ENCODE measurements at regions of chr21 and their contacts with region 1.

Region 1: GRCh38 chr21:43805275-43805800 is 16.0 kb downstream of the RRP1 start:
- DNase-seq: peak; percentile 69
- ATAC-seq: peak; percentile 97
- H3K4me3 Mint-ChIP-seq: peak overlapping the region; percentile 78
- H3K27ac Mint-ChIP-seq: peak overlapping the region; percentile 95
- H3K4me1 Mint-ChIP-seq: peaks cover 37% of the 10 kb centered on the region
- H3K27me3 Mint-ChIP-seq: peaks cover 2% of the 10 kb centered on the region
- CTCF ChIP-seq: no peak

Region 2: DNA sequence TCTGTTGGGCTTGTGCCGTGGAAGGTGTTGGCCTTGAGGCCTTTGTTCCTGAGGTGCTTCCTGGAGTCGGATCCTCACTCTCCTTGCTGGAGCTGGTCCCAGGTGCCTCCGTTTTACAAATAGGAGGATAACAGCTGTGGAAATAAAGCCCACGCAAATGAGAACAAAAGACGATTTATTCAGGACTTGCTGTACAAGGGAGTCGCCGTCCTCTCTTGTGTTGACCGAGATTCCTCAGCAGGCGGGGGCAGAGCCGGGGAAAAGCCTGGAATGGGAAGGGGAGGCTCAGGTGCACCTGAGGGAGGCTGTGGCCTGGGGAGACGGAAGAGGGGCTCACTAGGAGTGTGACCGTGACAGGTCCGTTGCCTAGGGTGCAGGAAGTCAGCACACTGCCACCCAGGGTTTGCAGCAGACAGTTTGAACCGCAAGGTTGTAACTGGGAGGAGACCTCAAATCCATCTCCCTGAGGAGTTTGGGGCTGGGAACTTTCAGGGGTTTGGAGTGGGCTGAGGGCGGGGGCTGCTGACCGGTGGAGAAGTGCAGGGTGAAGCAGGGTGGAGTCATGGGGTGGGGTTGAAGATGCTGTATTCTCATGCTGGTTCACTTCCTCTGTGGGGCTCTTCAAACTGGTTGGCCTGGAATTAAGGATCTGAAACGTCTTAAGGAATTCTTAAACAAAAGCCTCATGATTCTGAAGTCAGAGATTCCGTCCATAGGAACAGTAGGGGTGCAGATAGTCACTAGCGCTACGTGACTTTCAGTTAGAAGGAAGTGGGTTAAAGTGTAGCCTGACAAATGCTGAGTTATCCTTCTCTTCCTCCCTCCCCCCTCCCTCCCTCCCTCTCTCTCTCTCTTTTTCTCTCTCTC is 26.6 kb before region 1 on chr21:
- CTCF ChIA-PET with region 1: no interaction called
- POLR2A ChIA-PET with region 1: no interaction called
- intact Hi-C with region 1: no loop called
- DNase-seq: no peak
- ATAC-seq: no peak
- H3K4me3 Mint-ChIP-seq: peak overlapping the region; percentile 52
- H3K27ac Mint-ChIP-seq: no peak overlapping the region
- H3K4me1 Mint-ChIP-seq: peaks cover 27% of the 10 kb centered on the region
- H3K27me3 Mint-ChIP-seq: no peaks in the 10 kb centered on the region
- CTCF ChIP-seq: no peak

Region 3: GRCh38 chr21:44478124-44478800 is 672.9 kb after region 1 on chr21:
- CTCF ChIA-PET with region 1: no interaction called
- POLR2A ChIA-PET with region 1: no interaction called
- intact Hi-C with region 1: loop called (anchors 2 kb)
- DNase-seq: no peak
- ATAC-seq: no peak
- H3K4me3 Mint-ChIP-seq: no peak overlapping the region
- H3K27ac Mint-ChIP-seq: no peak overlapping the region
- H3K4me1 Mint-ChIP-seq: peaks cover 4% of the 10 kb centered on the region
- H3K27me3 Mint-ChIP-seq: peaks cover 4% of the 10 kb centered on the region
- CTCF ChIP-seq: no peak